ENCODE measurements at regions of chr1 and their contacts with region 1.

Region 1: DNA sequence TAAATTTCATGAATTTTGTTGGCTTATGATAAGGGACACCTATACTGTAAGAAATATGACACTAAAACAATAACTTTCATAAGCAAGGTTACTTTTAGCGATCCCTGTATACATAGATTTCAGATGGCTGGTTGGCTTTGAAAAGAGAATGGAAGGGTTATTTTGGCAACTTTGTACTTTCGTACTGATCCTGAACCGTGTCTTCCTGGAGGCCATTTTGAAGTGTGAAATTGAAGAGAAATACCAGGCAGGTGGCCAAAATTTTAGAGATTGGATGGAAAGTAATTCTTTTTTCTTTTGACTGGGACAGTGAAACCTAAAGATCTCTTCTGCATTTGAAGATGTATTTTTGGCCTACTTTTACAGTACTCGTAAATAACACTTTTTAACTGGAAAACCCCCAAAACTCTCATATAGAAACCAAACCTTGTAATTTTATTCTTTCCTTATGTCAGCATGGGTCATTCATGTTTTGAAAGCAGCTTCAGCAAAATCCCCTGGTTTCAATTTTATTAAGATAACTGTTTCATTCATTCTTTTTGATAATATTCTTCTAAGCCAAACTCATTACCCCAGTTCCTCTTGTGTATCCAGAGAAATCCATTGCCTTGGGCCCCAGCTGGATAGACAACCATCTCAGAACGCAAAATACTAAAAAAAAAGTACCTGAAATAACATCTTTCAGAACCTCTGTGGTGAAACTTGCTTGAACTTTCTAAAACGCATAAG is 38.4 kb upstream of the ZNF281 start:
- DNase-seq: no peak
- H3K4me3 Mint-ChIP-seq: peak overlapping the region; percentile 33
- H3K27ac Mint-ChIP-seq: peak overlapping the region; percentile 95
- H3K4me1 Mint-ChIP-seq: peaks cover 38% of the 10 kb centered on the region
- H3K27me3 Mint-ChIP-seq: no peaks in the 10 kb centered on the region

Region 2: GRCh38 chr1:200380589-200381021 is 67.6 kb before region 1 on chr1:
- intact Hi-C with region 1: loop called (anchors 1 kb)
- DNase-seq: peak; percentile 47
- H3K4me3 Mint-ChIP-seq: no peak overlapping the region
- H3K27ac Mint-ChIP-seq: no peak overlapping the region
- H3K4me1 Mint-ChIP-seq: peaks cover 25% of the 10 kb centered on the region
- H3K27me3 Mint-ChIP-seq: no peaks in the 10 kb centered on the region

Region 3: GRCh38 chr1:200437556-200438203 is 10.5 kb before region 1 on chr1:
- intact Hi-C with region 1: no loop called
- DNase-seq: peak; percentile 59
- H3K4me3 Mint-ChIP-seq: peak overlapping the region; percentile 73
- H3K27ac Mint-ChIP-seq: peak overlapping the region; percentile 84
- H3K4me1 Mint-ChIP-seq: peaks cover 9% of the 10 kb centered on the region
- H3K27me3 Mint-ChIP-seq: no peaks in the 10 kb centered on the region

Measured in activated CD4-positive, alpha-beta T cell treated with anti-CD3 and anti-CD28 coated beads, Interleukin-2, amount 10 ng/mL, durations not matched to agents 24 days and 14 days (primary cell).